Heart right ventricle (tissue), 16 donors: ENCODE measurements at regions of chr1 and their contacts with region 1.

Region 1: GRCh38 chr1:39098546-39099250 is 72.5 kb downstream of the NDUFS5 start:
- DNase-seq: peak; percentile 25 to 59
- ATAC-seq: peak; percentile 58 to 79 (median 68)
- H3K4me3 ChIP-seq: no peak overlapping the region
- H3K27ac ChIP-seq: no peak overlapping the region
- H3K4me1 ChIP-seq: peaks cover 0 to 32% (median 19%) of the 10 kb centered on the region in 9 donors
- H3K27me3 ChIP-seq: no peaks in the 10 kb centered on the region
- CTCF ChIP-seq: peak; percentile 65 to 85 (median 73)

Region 2: DNA sequence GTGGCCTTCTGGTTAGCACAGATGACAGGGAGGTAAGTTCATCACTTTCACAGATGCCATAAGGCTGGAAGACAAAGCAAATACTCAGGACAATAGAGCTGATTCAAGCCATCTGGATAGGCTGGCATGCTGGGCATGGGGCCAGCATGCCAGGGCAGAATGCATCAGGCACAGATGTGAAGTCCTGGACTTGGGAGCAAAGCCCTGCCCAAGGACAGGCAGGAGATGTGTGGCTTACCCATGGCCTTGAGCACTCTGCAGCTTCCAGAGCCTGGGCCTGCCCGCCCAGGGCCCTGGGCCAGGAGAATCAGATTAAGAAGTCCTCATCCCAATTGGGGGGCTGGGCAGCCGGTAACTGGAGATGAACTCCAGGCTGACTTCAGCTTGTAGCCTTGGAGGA is 1760.0 kb before region 1 on chr1:
- intact Hi-C with region 1: no loop called
- DNase-seq: no peak
- ATAC-seq: no peak
- H3K4me3 ChIP-seq: no peak overlapping the region
- H3K27ac ChIP-seq: no peak overlapping the region
- H3K4me1 ChIP-seq: no peaks in the 10 kb centered on the region
- H3K27me3 ChIP-seq: peaks cover 0 to 15% (median 3%) of the 10 kb centered on the region in 7 donors
- CTCF ChIP-seq: no peak

Region 3: DNA sequence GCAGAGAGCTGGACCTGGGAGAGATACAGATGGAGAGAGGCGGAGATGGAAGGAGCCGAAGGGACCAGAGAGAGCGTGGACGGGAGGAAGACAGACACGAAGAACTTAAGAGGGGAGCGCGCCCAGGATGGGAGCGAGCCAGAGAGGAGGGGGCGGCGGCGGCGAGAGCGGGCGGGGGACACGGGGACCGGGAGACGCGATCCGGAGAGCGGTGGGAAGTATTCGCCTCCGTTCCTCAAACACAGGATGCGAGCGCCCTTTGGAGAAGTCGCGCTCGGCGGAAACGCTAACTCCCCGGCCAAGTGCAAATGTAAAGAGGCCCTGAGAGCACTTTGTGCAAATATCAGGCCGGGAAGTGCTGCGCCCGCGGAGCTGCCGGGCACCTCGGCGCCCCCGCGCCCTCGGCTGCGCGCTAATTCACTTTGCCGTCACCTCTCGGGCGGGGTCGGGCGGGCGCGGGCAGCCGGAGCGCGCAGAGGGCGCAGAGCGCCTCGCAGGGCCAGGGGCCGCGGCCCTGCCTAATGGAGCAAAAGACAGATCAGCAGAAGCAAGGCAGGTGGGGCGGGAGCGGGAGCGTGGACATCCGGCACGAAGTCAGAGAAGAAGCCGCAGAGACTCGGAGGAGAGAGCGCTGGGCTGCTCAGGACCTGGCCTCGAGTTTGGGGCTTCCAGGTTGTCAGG is 520.3 kb before region 1 on chr1:
- intact Hi-C with region 1: no loop called
- DNase-seq: no peak
- ATAC-seq: peak in 1 of 8 donors; percentile 20
- H3K4me3 ChIP-seq: peak overlapping the region in 6 of 10 donors; percentile 10 to 37 (median 28)
- H3K27ac ChIP-seq: no peak overlapping the region
- H3K4me1 ChIP-seq: peaks cover 0 to 11% (median 0%) of the 10 kb centered on the region in 9 donors
- H3K27me3 ChIP-seq: peaks cover 6 to 69% (median 61%) of the 10 kb centered on the region in 7 donors
- CTCF ChIP-seq: no peak

Region 4: DNA sequence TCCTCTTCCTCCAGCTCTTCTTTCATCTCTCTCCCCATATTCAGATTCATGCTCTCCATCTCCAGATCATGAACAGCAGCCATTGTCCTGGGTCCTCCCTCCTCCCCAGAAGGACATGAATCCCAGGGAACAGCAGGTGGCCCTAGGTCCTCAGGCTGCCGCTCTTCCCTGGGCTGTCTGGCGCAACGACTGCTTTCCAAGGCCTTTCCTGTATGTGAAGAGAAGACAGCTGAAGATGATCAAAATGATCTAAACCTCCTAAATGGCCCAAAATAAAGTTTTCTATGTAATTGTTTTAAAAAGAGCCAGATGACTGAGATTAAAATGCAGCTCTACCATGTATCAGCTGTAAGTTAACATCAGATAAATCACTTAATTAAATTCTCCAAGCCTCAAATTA is 179.6 kb before region 1 on chr1:
- intact Hi-C with region 1: loop called in 1 of 10 experiments (anchors 10 kb)
- DNase-seq: no peak
- ATAC-seq: peak in 2 of 8 donors; percentile 45 to 51
- H3K4me3 ChIP-seq: no peak overlapping the region
- H3K27ac ChIP-seq: no peak overlapping the region
- H3K4me1 ChIP-seq: no peaks in the 10 kb centered on the region
- H3K27me3 ChIP-seq: no peaks in the 10 kb centered on the region
- CTCF ChIP-seq: peak in 4 of 9 donors; percentile 10 to 33 (median 20)

Region 5: DNA sequence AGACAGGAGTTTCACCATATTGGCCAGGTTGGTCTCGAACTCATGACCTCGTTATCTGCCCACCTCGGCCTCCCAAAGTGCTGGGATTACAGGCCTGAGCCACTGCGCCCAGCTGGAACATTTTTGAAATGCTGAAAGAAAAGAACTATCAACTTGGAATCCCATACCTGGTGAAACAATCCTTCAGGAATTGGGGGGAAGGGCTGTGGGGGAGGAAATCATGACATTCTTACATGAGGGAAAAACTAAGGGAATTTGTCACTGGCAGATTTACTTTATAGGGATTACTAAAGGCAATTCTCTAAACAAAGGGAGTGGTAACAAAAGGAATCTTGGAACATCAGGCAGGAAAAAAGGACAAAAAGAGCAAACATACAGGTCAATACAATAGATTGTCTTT is 46.7 kb before region 1 on chr1:
- intact Hi-C with region 1: no loop called
- DNase-seq: no peak
- ATAC-seq: no peak
- H3K4me3 ChIP-seq: no peak overlapping the region
- H3K27ac ChIP-seq: no peak overlapping the region
- H3K4me1 ChIP-seq: peaks cover under 1 to 12% (median 8%) of the 10 kb centered on the region in 9 donors
- H3K27me3 ChIP-seq: no peaks in the 10 kb centered on the region
- CTCF ChIP-seq: no peak

Region 6: DNA sequence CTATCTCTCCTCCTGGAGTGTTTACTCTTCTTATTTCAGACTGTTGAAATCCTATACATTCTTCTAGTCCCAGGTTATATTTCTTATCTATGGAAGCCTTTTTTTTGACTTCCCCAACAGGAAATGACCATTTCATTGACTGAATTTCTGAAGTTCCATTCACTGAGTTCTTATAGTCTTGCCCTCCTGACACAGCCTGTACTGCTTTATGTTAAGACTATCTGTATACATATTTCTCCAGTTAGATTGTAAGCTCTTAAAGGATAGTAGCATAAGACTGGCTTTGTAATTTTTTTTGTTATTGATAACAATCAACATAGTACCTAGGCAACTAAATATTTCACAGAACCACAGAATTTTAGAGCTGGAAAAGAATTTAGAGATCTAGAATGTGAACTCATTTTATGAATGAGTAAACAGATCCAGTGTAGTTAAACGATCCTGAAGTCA is 90.9 kb after region 1 on chr1:
- intact Hi-C with region 1: loop called in 8 of 10 experiments (anchors 1 to 5 kb)
- DNase-seq: no peak
- ATAC-seq: no peak
- H3K4me3 ChIP-seq: no peak overlapping the region
- H3K27ac ChIP-seq: no peak overlapping the region
- H3K4me1 ChIP-seq: peaks cover 3 to 67% (median 37%) of the 10 kb centered on the region in 9 donors
- H3K27me3 ChIP-seq: no peaks in the 10 kb centered on the region
- CTCF ChIP-seq: no peak

Region 7: GRCh38 chr1:39258146-39258924 is 159.6 kb after region 1 on chr1:
- intact Hi-C with region 1: loop called in 7 of 10 experiments (anchors 1 to 10 kb)
- DNase-seq: peak; percentile 26 to 75
- ATAC-seq: peak; percentile 73 to 87 (median 86)
- H3K4me3 ChIP-seq: no peak overlapping the region
- H3K27ac ChIP-seq: peak overlapping the region in 7 of 10 donors; percentile 11 to 63 (median 49)
- H3K4me1 ChIP-seq: peaks cover 0 to 43% (median 22%) of the 10 kb centered on the region in 9 donors
- H3K27me3 ChIP-seq: no peaks in the 10 kb centered on the region
- CTCF ChIP-seq: peak; percentile 80 to 91 (median 85)

Region 8: GRCh38 chr1:39522661-39523567 is 424.2 kb after region 1 on chr1:
- intact Hi-C with region 1: no loop called
- DNase-seq: no peak
- ATAC-seq: peak in 1 of 8 donors; percentile 20
- H3K4me3 ChIP-seq: no peak overlapping the region
- H3K27ac ChIP-seq: no peak overlapping the region
- H3K4me1 ChIP-seq: no peaks in the 10 kb centered on the region
- H3K27me3 ChIP-seq: no peaks in the 10 kb centered on the region
- CTCF ChIP-seq: no peak